ENCODE measurements at regions of chr10 and their contacts with region 1.

Region 1: GRCh38 chr10:63083904-63084689 is 49.0 kb upstream of the NRBF2 start:
- ATAC-seq: peak in 7 of 8 experiments; percentile 48 to 91 (median 74)
- H3K4me3 ChIP-seq: no peak overlapping the region
- H3K27ac ChIP-seq: no peak overlapping the region
- H3K4me1 ChIP-seq: no peaks in the 10 kb centered on the region

Region 2: GRCh38 chr10:62594093-62594520 is 490.0 kb before region 1 on chr10:
- in situ Hi-C with region 1: loop called in 1 of 9 experiments (anchors 25 kb)
- ATAC-seq: peak; percentile 38 to 94 (median 80)
- H3K4me3 ChIP-seq: no peak overlapping the region
- H3K27ac ChIP-seq: no peak overlapping the region
- H3K4me1 ChIP-seq: no peaks in the 10 kb centered on the region

Region 3: DNA sequence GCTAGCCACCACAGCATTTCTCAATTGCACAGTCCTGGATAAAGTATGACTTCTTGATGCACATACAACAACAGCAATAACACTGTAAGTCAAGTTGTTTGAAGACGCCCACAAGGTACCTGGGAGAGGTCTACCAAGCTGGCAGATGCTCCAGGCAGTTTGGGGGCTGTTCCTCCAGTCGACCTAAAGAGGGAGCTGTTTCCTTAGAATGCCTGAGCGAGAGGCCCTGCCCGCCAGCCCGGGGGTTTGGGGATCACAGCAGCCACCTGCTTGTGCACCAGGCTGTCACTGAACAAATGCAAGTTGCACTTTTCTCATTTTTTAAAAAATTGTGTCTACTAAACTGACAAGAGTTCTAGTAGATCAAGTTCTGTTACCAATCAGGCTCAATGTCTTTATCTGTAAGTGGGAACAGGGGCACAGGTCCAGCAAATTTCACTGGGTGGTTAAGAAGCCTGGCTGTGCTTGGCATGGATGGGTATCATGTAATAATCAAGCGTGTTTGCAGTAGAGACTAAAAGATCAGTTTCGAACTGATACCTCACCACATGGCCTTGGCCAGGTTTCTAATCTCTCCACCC is 473.4 kb before region 1 on chr10:
- in situ Hi-C with region 1: loop called in 1 of 9 experiments (anchors 25 kb)
- ATAC-seq: peak; percentile 56 to 95 (median 74)
- H3K4me3 ChIP-seq: no peak overlapping the region
- H3K27ac ChIP-seq: no peak overlapping the region
- H3K4me1 ChIP-seq: peaks cover 0 to 2% of the 10 kb centered on the region in 2 donors

Region 4: GRCh38 chr10:62816331-62817120 is 267.6 kb before region 1 on chr10 and contains the start of gene EGR2:
- in situ Hi-C with region 1: loop called in 1 of 9 experiments (anchors 10 kb)
- ATAC-seq: peak; percentile 81 to 89 (median 84)
- H3K4me3 ChIP-seq: peak within 1 kb of the TSS; percentile 65 to 97 (median 81)
- H3K27ac ChIP-seq: peak within 1 kb of the TSS in 1 of 2 donors; percentile 43
- H3K4me1 ChIP-seq: peaks cover 7 to 20% of the 10 kb centered on the region in 2 donors
- total RNA-seq, gene EGR2: 0.33 to 9.9 (median 0.87) TPM

Region 5: GRCh38 chr10:62895058-62895457 is 189.0 kb before region 1 on chr10:
- in situ Hi-C with region 1: no loop called
- ATAC-seq: peak in 1 of 8 experiments; percentile 35
- H3K4me3 ChIP-seq: no peak overlapping the region
- H3K27ac ChIP-seq: no peak overlapping the region
- H3K4me1 ChIP-seq: no peaks in the 10 kb centered on the region

Region 6: GRCh38 chr10:63042256-63042655 is 41.8 kb before region 1 on chr10:
- in situ Hi-C with region 1: no loop called
- ATAC-seq: peak in 1 of 8 experiments; percentile 22
- H3K4me3 ChIP-seq: no peak overlapping the region
- H3K27ac ChIP-seq: no peak overlapping the region
- H3K4me1 ChIP-seq: no peaks in the 10 kb centered on the region

Measured in motor neuron (in vitro differentiated cells).